Mammary epithelial cell (primary cell): ENCODE measurements at regions of chr1 and their contacts with region 1.

Region 1: GRCh38 chr1:166432655-166433054 is 265.9 kb upstream of the FAM78B start:
- DNase-seq: no peak
- H3K4me3 ChIP-seq: no peak overlapping the region
- H3K27ac ChIP-seq: no peak overlapping the region
- H3K4me1 ChIP-seq: no peaks in the 10 kb centered on the region
- H3K27me3 ChIP-seq: no peaks in the 10 kb centered on the region
- CTCF ChIP-seq: no peak

Region 2: GRCh38 chr1:165928075-165928731 is 504.5 kb before region 1 on chr1:
- CTCF ChIA-PET with region 1: no interaction called
- dilution Hi-C with region 1: loop called (anchors 5 kb)
- in situ Hi-C with region 1: loop called (anchors 10 to 25 kb)
- intact Hi-C with region 1: loop called (anchors 1 kb)
- DNase-seq: peak; percentile 60
- H3K4me3 ChIP-seq: no peak overlapping the region
- H3K27ac ChIP-seq: no peak overlapping the region
- H3K4me1 ChIP-seq: no peaks in the 10 kb centered on the region
- H3K27me3 ChIP-seq: no peaks in the 10 kb centered on the region
- CTCF ChIP-seq: peak; percentile 64 to 78

Region 3: DNA sequence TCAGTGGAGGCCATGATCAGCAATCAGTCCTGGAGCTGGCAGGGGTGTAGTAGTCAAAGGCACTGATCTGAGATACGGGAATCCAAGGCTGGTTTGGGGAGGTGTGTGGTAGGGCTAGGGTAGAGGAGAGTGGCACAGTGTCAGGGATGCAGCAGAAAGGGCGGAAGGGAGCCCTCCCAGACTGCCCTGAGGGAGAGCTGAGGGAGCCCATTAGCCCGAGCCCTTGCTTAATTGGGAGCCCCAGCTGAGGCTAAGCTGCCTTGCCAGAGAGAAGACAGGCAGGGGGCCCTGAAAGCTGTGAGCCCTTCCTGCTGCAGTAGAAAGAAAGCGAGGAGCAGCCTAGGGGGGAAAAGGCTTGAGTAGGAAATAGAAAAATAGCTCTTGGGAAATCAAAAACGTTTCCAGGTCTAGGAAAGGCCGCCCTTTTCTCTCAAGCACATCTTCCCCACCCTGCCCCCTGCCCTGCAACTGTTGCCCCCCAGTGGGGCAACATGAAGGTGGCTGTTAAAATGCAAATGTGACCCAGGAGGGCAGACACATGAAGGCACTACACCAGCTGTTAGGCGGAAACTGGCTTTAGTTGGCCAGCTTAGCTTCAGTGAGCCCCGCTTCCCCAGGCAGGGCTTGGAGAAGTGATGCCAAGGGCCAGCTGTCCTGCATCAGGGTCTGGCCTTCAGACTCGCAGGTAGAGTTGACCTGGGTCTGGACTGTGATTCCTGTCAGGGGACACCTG is 499.0 kb before region 1 on chr1:
- CTCF ChIA-PET with region 1: no interaction called
- dilution Hi-C with region 1: loop called (anchors 5 kb)
- in situ Hi-C with region 1: loop called (anchors 10 to 25 kb)
- intact Hi-C with region 1: no loop called
- DNase-seq: no peak
- H3K4me3 ChIP-seq: no peak overlapping the region
- H3K27ac ChIP-seq: no peak overlapping the region
- H3K4me1 ChIP-seq: no peaks in the 10 kb centered on the region
- H3K27me3 ChIP-seq: no peaks in the 10 kb centered on the region
- CTCF ChIP-seq: no peak

Region 4: GRCh38 chr1:166133276-166133841 is 299.3 kb before region 1 on chr1:
- CTCF ChIA-PET with region 1: no interaction called
- dilution Hi-C with region 1: no loop called
- in situ Hi-C with region 1: loop called in 1 of 2 experiments (anchors 25 kb)
- intact Hi-C with region 1: loop called (anchors 1 kb)
- DNase-seq: peak; percentile 5
- H3K4me3 ChIP-seq: no peak overlapping the region
- H3K27ac ChIP-seq: no peak overlapping the region
- H3K4me1 ChIP-seq: no peaks in the 10 kb centered on the region
- H3K27me3 ChIP-seq: no peaks in the 10 kb centered on the region
- CTCF ChIP-seq: peak; percentile 75 to 90

Region 5: GRCh38 chr1:166166695-166167571 is 265.7 kb before region 1 on chr1 and contains the start of gene FAM78B:
- CTCF ChIA-PET with region 1: no interaction called
- dilution Hi-C with region 1: no loop called
- in situ Hi-C with region 1: no loop called
- intact Hi-C with region 1: loop called (anchors 10 kb)
- DNase-seq: peak; percentile 67
- H3K4me3 ChIP-seq: peak within 1 kb of the TSS; percentile 44 to 69 (median 65)
- H3K27ac ChIP-seq: no peak within 1 kb of the TSS
- H3K4me1 ChIP-seq: peaks cover 38% of the 10 kb centered on the region
- H3K27me3 ChIP-seq: peaks cover 20% of the 10 kb centered on the region
- CTCF ChIP-seq: peak in 1 of 2 donors; percentile 7
- total RNA-seq, gene FAM78B: 0.33 to 0.40 TPM

Region 6: DNA sequence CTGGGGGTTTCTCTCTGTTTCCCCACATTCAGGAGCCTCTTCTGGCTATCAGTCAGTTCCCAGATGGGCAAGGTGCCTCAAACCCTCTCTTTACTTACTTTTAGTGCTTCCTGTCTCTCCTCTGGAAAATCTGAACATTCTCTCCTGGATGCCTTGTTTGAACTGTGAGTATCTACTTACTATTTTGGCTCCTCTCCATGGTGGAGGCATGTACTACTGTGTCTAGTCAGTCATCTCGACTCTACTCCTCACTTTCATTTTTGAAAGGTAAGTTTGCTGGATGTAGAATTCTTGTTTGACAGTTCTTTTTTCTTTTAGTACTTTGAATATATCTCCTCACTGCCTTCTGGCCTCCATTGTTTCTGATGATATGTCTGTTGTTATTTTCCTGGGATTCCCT is 195.0 kb before region 1 on chr1:
- CTCF ChIA-PET with region 1: no interaction called
- dilution Hi-C with region 1: no loop called
- in situ Hi-C with region 1: no loop called
- intact Hi-C with region 1: no loop called
- DNase-seq: no peak
- H3K4me3 ChIP-seq: no peak overlapping the region
- H3K27ac ChIP-seq: no peak overlapping the region
- H3K4me1 ChIP-seq: no peaks in the 10 kb centered on the region
- H3K27me3 ChIP-seq: no peaks in the 10 kb centered on the region
- CTCF ChIP-seq: no peak

Region 7: GRCh38 chr1:166379447-166379846 is 53.2 kb before region 1 on chr1:
- CTCF ChIA-PET with region 1: no interaction called
- dilution Hi-C with region 1: loop called (anchors 5 kb)
- in situ Hi-C with region 1: no loop called
- intact Hi-C with region 1: no loop called
- DNase-seq: no peak
- H3K4me3 ChIP-seq: no peak overlapping the region
- H3K27ac ChIP-seq: no peak overlapping the region
- H3K4me1 ChIP-seq: no peaks in the 10 kb centered on the region
- H3K27me3 ChIP-seq: no peaks in the 10 kb centered on the region
- CTCF ChIP-seq: no peak

Region 8: DNA sequence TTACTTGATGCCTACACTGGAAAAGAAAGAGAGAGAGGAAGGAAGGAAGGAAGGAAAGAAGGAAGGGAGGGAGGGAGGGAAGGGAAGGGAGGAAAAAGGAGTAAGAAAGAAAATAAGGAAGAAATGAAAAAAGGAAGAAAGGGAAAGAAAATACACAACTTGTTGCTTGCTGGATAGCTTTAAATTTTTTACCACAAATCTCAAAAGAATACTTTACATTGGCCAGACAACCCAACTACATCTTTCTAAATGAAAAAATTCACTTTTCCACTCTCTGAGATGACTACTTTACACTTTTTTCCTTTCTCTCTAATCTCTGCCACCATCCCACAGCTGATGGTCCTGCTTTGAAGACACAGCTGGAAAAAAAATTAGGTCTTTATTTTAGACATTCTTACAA is 36.9 kb before region 1 on chr1:
- CTCF ChIA-PET with region 1: no interaction called
- dilution Hi-C with region 1: no loop called
- in situ Hi-C with region 1: no loop called
- intact Hi-C with region 1: no loop called
- DNase-seq: no peak
- H3K4me3 ChIP-seq: no peak overlapping the region
- H3K27ac ChIP-seq: no peak overlapping the region
- H3K4me1 ChIP-seq: no peaks in the 10 kb centered on the region
- H3K27me3 ChIP-seq: peaks cover 4% of the 10 kb centered on the region
- CTCF ChIP-seq: no peak

Region 9: GRCh38 chr1:166479052-166479631 is 46.5 kb after region 1 on chr1:
- CTCF ChIA-PET with region 1: no interaction called
- dilution Hi-C with region 1: loop called (anchors 5 kb)
- in situ Hi-C with region 1: no loop called
- intact Hi-C with region 1: no loop called
- DNase-seq: peak; percentile 9
- H3K4me3 ChIP-seq: no peak overlapping the region
- H3K27ac ChIP-seq: no peak overlapping the region
- H3K4me1 ChIP-seq: no peaks in the 10 kb centered on the region
- H3K27me3 ChIP-seq: no peaks in the 10 kb centered on the region
- CTCF ChIP-seq: peak; percentile 67 to 70